Aorta (tissue), 5 donors: ENCODE measurements at regions of chr16 and their contacts with region 1.

Region 1: GRCh38 chr16:1097800-1098199 is 1.8 kb upstream of the C1QTNF8 start:
- DNase-seq: peak; percentile 92 to 96
- ATAC-seq: peak; percentile 79
- H3K4me3 ChIP-seq: no peak overlapping the region
- H3K27ac ChIP-seq: peak overlapping the region in 1 of 2 donors; percentile 91
- H3K4me1 ChIP-seq: no peaks in the 10 kb centered on the region
- H3K27me3 ChIP-seq: no peaks in the 10 kb centered on the region

Region 2: GRCh38 chr16:1078579-1079021 is 19.2 kb before region 1 on chr16:
- intact Hi-C with region 1: loop called in 1 of 2 experiments (anchors 1 kb)
- DNase-seq: peak; percentile 81 to 90
- ATAC-seq: peak; percentile 63
- H3K4me3 ChIP-seq: no peak overlapping the region
- H3K27ac ChIP-seq: peak overlapping the region in 1 of 2 donors; percentile 13
- H3K4me1 ChIP-seq: peaks cover 0 to 2% of the 10 kb centered on the region in 2 donors
- H3K27me3 ChIP-seq: no peaks in the 10 kb centered on the region

Region 3: GRCh38 chr16:1308977-1309885 is 211.4 kb after region 1 on chr16 and contains the start of gene UBE2I:
- intact Hi-C with region 1: no loop called
- DNase-seq: peak; percentile 97 to 99
- ATAC-seq: peak; percentile 96
- H3K4me3 ChIP-seq: peak within 1 kb of the TSS; percentile 89 to 94
- H3K27ac ChIP-seq: peak within 1 kb of the TSS; percentile 51 to 97
- H3K4me1 ChIP-seq: peaks cover 0 to 2% of the 10 kb centered on the region in 2 donors
- H3K27me3 ChIP-seq: no peaks in the 10 kb centered on the region
- total RNA-seq, gene UBE2I: 81.7 to 86.7 TPM